ENCODE measurements at regions of chr6 and their contacts with region 1.

Region 1: DNA sequence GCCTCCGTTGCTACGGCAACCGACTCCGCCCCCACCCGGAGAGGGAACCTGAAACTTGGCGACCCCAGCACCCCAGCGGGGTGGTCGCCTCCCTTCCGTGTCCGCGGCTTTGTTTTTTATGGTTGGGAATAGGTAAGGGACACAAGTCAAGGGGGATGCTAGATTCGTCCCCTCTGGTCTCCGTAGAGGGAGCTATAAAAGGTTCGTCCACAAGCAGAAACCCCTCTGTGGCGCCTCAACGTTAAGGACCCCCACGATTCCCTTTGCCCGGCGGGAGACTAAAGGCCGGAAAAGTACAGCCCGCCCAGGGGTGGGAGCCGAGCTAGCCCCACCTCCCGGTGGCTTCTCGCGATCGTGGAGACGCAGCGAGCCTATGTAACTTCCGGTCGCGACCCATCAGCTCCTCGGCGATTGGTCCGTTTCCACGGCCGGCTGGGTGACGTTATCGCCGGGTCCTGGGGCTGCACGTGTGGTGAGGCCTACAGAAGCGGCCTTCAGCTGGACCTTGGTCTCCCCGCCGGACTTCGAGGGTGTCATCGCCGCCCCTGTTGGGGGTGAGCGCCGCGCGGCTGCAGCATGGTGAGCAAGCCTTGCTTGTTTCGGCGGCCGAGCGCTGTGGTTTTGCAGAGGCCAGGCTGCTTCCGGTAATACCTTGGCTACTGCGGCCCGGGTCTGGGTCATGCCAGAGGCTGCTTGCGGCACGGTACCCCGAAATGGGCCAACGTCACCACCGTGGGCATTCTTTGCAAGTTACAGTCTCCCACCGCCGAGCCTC is at the start of gene LTV1:
- DNase-seq: peak; percentile 97
- H3K4me3 ChIP-seq: peak within 1 kb of the TSS; percentile 46 to 82 (median 49)
- H3K27ac ChIP-seq: peak within 1 kb of the TSS; percentile 90
- H3K4me1 ChIP-seq: peaks cover 9% of the 10 kb centered on the region
- H3K27me3 ChIP-seq: no peaks in the 10 kb centered on the region
- CTCF ChIP-seq: no peak
- POLR2A ChIP-seq: peak; percentile 92
- total RNA-seq, gene LTV1: 26.6 and 26.9 TPM in 2 replicates

Region 2: DNA sequence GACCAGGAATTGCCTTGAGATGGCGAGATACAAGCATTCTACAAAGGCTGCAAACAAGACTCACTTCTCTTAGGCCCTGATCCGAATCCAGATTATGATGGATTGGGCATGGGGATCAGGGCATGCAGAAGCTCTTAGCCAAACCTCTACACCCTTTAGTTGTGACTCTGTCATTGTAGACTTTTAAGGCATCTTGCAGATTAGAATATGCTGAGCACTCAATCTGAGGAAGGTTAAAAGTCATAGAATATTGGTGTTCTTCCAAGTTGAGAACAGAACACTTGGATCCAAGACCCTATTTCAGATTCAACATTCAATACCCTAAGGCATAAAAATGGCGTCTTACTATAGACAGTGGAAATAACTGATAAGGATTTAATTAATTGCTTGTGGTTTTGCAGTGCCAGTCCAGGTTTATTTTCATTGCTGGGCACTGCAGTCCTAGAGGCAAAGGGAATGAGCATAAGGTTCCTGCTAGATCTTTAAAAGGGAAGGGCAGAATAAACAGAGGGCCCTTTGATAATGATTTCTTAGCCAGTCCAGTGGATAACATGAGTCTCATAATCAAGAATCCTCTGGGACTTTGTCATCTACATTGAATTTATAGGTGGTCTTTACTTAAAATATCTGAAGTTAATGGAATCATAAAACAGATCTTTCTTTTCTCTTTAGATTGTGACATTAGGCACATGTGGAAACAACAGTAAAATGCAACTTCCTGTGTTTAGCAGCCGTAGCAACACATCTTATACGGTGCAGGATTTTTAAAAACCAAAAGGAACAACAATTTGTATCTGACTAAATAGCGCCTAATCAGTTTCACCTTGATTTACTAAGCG is 147.7 kb before region 1 on chr6:
- CTCF ChIA-PET with region 1: interaction called, 3 read pairs
- POLR2A ChIA-PET with region 1: no interaction called
- dilution Hi-C with region 1: no loop called
- intact Hi-C with region 1: loop called (anchors 2 kb)
- DNase-seq: peak; percentile 49
- H3K4me3 ChIP-seq: no peak overlapping the region
- H3K27ac ChIP-seq: peak overlapping the region; percentile 0
- H3K4me1 ChIP-seq: peaks cover 53% of the 10 kb centered on the region
- H3K27me3 ChIP-seq: no peaks in the 10 kb centered on the region
- CTCF ChIP-seq: no peak
- POLR2A ChIP-seq: no peak

Region 3: DNA sequence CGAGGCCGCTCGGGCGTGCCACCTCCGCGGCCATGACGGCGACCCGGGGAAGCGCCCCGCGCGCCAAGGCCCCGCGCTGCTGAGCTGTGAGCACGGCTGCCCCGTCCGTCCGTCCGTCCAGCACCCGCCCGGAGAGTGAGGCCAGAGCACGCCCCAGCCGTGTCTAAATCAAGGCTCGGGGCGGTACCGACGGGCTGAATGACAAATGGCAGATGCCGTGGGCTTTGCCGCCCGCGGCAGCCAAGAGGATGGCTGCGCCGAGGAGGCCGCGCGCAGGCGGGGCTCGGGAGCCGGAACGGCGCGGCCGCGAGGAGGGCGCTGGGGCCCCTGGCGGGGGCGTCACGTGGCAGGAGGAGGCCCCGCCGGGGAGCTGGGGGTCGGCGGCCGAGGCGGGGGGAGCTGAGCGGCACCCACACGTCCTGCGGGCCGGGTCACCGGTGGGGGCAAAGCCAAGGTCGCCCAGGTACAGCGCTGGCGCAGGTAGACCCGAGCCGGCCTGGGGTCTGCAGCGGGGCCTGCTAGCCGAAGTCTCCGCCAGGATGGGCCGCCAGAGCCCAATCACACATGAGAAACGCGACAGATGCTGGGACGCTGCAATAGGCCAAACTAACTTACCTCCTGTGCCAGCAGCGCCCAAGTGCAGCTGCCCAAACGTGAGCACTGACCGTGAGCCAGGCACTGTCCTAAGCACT is 165.2 kb after region 1 on chr6 and contains the start of gene PLAGL1:
- CTCF ChIA-PET with region 1: interaction called, 5 read pairs
- POLR2A ChIA-PET with region 1: no interaction called
- dilution Hi-C with region 1: no loop called
- intact Hi-C with region 1: loop called (anchors 2 kb)
- DNase-seq: peak; percentile 57
- H3K4me3 ChIP-seq: peak within 1 kb of the TSS; percentile 63 to 90 (median 66)
- H3K27ac ChIP-seq: peak within 1 kb of the TSS; percentile 8
- H3K4me1 ChIP-seq: peaks cover 3% of the 10 kb centered on the region
- H3K27me3 ChIP-seq: peaks cover 4 to 5% of the 10 kb centered on the region in 2 experiments
- CTCF ChIP-seq: no peak
- POLR2A ChIP-seq: peak; percentile 72
- total RNA-seq, gene PLAGL1: 40.0 and 40.4 TPM in 2 replicates

Region 4: GRCh38 chr6:144897441-144897921 is 1054.4 kb after region 1 on chr6:
- CTCF ChIA-PET with region 1: no interaction called
- POLR2A ChIA-PET with region 1: no interaction called
- dilution Hi-C with region 1: no loop called
- intact Hi-C with region 1: no loop called
- DNase-seq: peak; percentile 61
- H3K4me3 ChIP-seq: no peak overlapping the region
- H3K27ac ChIP-seq: peak overlapping the region; percentile 49
- H3K4me1 ChIP-seq: peaks cover 17% of the 10 kb centered on the region
- H3K27me3 ChIP-seq: no peaks in the 10 kb centered on the region
- CTCF ChIP-seq: no peak
- POLR2A ChIP-seq: no peak

Measured in endothelial cell of umbilical vein (primary cell).